Uterus (tissue), 4 donors: ENCODE measurements at regions of chr6 and their contacts with region 1.

Region 1: GRCh38 chr6:15239616-15240364 is 6.1 kb upstream of the JARID2 start:
- DNase-seq: no peak
- H3K4me3 ChIP-seq: no peak overlapping the region
- H3K27ac ChIP-seq: no peak overlapping the region
- H3K4me1 ChIP-seq: no peaks in the 10 kb centered on the region
- H3K27me3 ChIP-seq: no peaks in the 10 kb centered on the region
- CTCF ChIP-seq: no peak
- POLR2A ChIP-seq: no peak

Region 2: GRCh38 chr6:15378866-15379265 is 139.1 kb after region 1 on chr6:
- intact Hi-C with region 1: no loop called
- DNase-seq: no peak
- H3K4me3 ChIP-seq: no peak overlapping the region
- H3K27ac ChIP-seq: no peak overlapping the region
- H3K4me1 ChIP-seq: no peaks in the 10 kb centered on the region
- H3K27me3 ChIP-seq: no peaks in the 10 kb centered on the region
- CTCF ChIP-seq: no peak
- POLR2A ChIP-seq: no peak

Region 3: DNA sequence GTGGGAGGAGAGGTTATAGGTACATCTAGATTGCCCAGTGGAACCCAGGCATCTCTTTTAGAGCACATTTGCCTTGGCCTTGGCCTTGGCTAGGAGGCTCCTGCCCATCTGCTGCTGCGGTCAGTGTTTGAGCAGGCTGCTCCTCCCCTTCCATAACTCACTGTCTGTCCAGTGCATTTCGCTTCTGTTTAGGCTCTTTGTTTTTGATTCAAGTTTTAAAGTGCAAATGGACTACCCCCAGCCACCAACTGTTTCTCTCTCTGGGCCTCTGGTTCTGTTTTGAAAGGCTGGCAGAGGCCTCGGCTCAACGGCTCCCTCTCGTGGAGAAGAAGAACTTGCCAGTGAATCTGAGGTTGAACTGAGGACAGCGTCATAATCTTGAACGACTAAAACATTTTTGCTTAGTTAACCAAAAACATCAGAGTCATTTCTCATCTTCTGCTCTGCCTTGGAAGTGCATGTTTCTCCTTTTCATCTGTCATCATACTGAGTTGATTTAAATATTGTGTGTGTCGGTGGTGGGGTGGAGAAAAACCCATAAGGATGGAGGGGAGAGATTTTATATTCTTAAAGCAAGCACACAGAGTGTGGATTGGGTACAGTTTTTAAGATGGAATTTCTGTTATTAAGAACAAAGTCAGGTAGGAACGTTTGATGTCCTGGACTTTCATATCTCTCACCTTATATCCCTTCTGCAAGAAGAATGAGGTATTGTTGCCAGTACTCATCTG is 251.6 kb after region 1 on chr6:
- intact Hi-C with region 1: loop called (anchors 10 kb)
- DNase-seq: peak; percentile 77 to 81
- H3K4me3 ChIP-seq: no peak overlapping the region
- H3K27ac ChIP-seq: peak overlapping the region in 1 of 2 donors; percentile 42
- H3K4me1 ChIP-seq: peaks cover 5 to 10% of the 10 kb centered on the region in 2 donors
- H3K27me3 ChIP-seq: no peaks in the 10 kb centered on the region
- CTCF ChIP-seq: peak; percentile 78 to 96 (median 82)
- POLR2A ChIP-seq: peak in 1 of 2 donors; percentile 13